ENCODE measurements at regions of chr19 and their contacts with region 1.

Region 1: DNA sequence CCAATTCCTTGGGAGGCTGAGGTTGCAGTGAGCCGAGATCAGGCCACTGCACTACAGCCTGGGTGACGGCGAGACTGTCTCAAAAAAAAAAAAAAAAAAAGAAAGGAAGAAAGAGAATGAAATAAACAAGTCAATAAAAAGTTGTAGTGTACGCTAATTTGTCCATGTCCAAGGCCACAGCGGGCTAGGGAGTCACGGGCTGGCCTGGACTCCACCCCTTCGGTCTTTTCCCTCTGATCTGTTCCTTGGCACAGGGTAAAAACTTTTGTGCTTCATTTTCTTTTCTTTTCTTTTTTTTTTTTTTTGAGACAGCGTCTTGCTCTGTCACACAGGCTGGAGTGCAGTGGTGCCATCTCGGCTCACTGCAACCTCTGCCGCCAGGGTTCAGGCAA is 19.4 kb upstream of the MKNK2 start:
- DNase-seq: peak; percentile 74
- H3K4me3 ChIP-seq: no peak overlapping the region
- H3K27ac ChIP-seq: peak overlapping the region; percentile 78 to 85 (median 83)
- H3K4me1 ChIP-seq: peaks cover 0 to 49% (median 27%) of the 10 kb centered on the region in 4 donors
- H3K27me3 ChIP-seq: no peaks in the 10 kb centered on the region
- CTCF ChIP-seq: no peak
- EP300 ChIP-seq: no peak
- POLR2A ChIP-seq: no peak

Region 2: GRCh38 chr19:1929021-1929742 is 141.2 kb before region 1 on chr19:
- in situ Hi-C with region 1: no loop called
- intact Hi-C with region 1: loop called (anchors 10 kb)
- DNase-seq: peak; percentile 88
- H3K4me3 ChIP-seq: peak overlapping the region in 3 of 4 donors; percentile 17 to 46 (median 26)
- H3K27ac ChIP-seq: no peak overlapping the region
- H3K4me1 ChIP-seq: peaks cover 0 to 16% (median 11%) of the 10 kb centered on the region in 4 donors
- H3K27me3 ChIP-seq: no peaks in the 10 kb centered on the region
- CTCF ChIP-seq: peak; percentile 91 to 94 (median 92)
- EP300 ChIP-seq: no peak
- POLR2A ChIP-seq: no peak

Region 3: DNA sequence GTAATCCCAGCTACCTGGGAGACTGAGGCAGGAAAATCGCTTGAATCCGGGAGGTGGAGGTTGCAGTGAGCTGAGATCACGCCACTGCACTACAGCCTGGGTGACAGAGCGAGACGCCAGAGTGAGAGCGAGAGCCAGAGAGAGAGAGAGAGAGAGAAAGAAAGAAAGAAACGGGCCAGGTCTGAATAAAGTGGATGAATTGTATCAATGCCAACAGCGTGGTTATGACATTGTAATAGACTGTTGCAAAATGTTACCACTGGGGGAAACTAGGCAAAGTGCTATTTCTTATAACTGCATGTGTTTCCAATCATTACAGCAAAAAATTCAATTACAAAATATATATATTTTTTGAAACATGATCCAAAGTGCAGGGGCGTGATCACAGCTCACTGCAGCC is 43.1 kb before region 1 on chr19:
- in situ Hi-C with region 1: loop called in 2 of 4 experiments (anchors 5 to 10 kb)
- intact Hi-C with region 1: loop called (anchors 5 kb)
- DNase-seq: no peak
- H3K4me3 ChIP-seq: no peak overlapping the region
- H3K27ac ChIP-seq: no peak overlapping the region
- H3K4me1 ChIP-seq: peaks cover 10 to 41% (median 19%) of the 10 kb centered on the region in 4 donors
- H3K27me3 ChIP-seq: no peaks in the 10 kb centered on the region
- CTCF ChIP-seq: no peak
- EP300 ChIP-seq: no peak
- POLR2A ChIP-seq: no peak